ENCODE measurements at regions of chrX and their contacts with region 1.

Region 1: GRCh38 chrX:51461053-51462044 is 35.0 kb downstream of the NUDT11 start:
- DNase-seq: peak; percentile 16
- H3K4me3 ChIP-seq: no peak overlapping the region
- H3K27ac ChIP-seq: no peak overlapping the region
- H3K4me1 ChIP-seq: no peaks in the 10 kb centered on the region
- H3K27me3 ChIP-seq: no peaks in the 10 kb centered on the region
- CTCF ChIP-seq: peak; percentile 76 to 84

Region 2: GRCh38 chrX:51144852-51145442 is 316.4 kb before region 1 on chrX:
- CTCF ChIA-PET with region 1: no interaction called
- dilution Hi-C with region 1: no loop called
- in situ Hi-C with region 1: no loop called
- intact Hi-C with region 1: loop called (anchors 1 kb)
- DNase-seq: peak; percentile 16
- H3K4me3 ChIP-seq: no peak overlapping the region
- H3K27ac ChIP-seq: no peak overlapping the region
- H3K4me1 ChIP-seq: no peaks in the 10 kb centered on the region
- H3K27me3 ChIP-seq: no peaks in the 10 kb centered on the region
- CTCF ChIP-seq: peak; percentile 72 to 74

Region 3: DNA sequence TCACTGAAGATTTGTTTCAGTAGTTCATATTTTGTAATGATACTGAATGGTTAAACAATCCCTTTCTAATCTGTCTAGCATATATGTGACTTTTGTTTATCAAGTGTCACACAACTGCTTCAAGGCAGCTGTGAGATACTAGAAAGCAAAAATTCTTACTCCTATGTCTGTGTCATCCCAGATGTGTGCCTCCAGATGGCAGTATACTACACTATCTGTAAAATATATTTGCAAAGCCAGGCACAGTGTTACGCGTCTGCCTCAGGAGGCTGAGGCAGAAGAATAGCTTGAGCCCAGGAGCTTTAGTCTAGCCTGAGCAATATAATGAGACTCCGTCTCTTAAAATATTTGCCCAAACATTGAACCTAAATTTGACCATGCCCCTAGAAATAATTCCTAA is 124.8 kb before region 1 on chrX:
- CTCF ChIA-PET with region 1: no interaction called
- dilution Hi-C with region 1: no loop called
- in situ Hi-C with region 1: no loop called
- intact Hi-C with region 1: loop called (anchors 1 kb)
- DNase-seq: peak; percentile 25
- H3K4me3 ChIP-seq: no peak overlapping the region
- H3K27ac ChIP-seq: no peak overlapping the region
- H3K4me1 ChIP-seq: no peaks in the 10 kb centered on the region
- H3K27me3 ChIP-seq: peaks cover 2% of the 10 kb centered on the region
- CTCF ChIP-seq: peak; percentile 53 to 66

Measured in mammary epithelial cell (primary cell).